MCF 10A (cell line): ENCODE measurements at regions of chr3 and their contacts with region 1.

Region 1: DNA sequence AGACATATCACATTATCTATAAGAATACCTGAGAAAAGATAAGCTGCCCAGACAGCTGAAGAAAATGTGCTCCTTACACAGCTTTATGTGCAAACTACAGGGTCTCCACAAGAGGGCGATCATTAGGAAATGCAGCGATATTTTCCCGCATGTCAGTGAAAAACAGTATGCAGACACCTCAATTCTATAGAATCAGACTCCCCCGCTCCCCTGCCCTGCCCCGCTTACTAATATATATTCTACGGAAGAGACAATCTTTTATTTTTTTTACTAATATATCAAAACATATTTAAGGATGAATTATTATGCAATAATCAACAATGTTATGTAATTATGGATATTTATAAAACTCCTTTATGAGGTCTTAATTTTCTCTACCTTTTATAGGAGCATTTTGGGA is 681.3 kb downstream of the ROBO1 start:
- DNase-seq: peak; percentile 69
- H3K4me3 Mint-ChIP-seq: no peak overlapping the region
- H3K27ac Mint-ChIP-seq: no peak overlapping the region
- H3K4me1 Mint-ChIP-seq: no peaks in the 10 kb centered on the region
- H3K27me3 Mint-ChIP-seq: peaks cover 100% of the 10 kb centered on the region
- CTCF ChIP-seq: peak; percentile 59

Region 2: DNA sequence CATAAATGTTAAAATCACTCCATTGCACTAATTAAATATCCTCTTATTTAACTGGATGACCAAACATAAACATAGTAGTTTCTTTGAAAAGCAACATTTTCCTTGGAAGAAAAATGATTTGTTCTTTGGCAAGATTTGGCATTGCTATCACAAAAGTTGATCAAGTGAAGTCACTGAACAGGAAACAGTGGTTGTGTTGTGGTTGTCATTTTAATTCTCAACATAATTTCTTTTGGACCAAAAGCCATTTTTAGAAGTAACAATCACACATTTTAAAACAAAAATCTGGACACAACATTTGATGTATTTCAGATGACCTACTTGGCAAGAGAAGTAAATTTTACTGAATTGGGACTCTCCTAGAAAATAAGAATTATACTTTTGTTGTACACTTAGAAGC is 191.0 kb before region 1 on chr3:
- CTCF ChIA-PET with region 1: no interaction called
- POLR2A ChIA-PET with region 1: no interaction called
- intact Hi-C with region 1: no loop called
- DNase-seq: no peak
- H3K4me3 Mint-ChIP-seq: no peak overlapping the region
- H3K27ac Mint-ChIP-seq: no peak overlapping the region
- H3K4me1 Mint-ChIP-seq: peaks cover 5% of the 10 kb centered on the region
- H3K27me3 Mint-ChIP-seq: no peaks in the 10 kb centered on the region
- CTCF ChIP-seq: no peak

Region 3: GRCh38 chr3:79103305-79103704 is 16.8 kb after region 1 on chr3:
- CTCF ChIA-PET with region 1: interaction called, 45 read pairs
- POLR2A ChIA-PET with region 1: no interaction called
- intact Hi-C with region 1: no loop called
- DNase-seq: no peak
- H3K4me3 Mint-ChIP-seq: no peak overlapping the region
- H3K27ac Mint-ChIP-seq: no peak overlapping the region
- H3K4me1 Mint-ChIP-seq: no peaks in the 10 kb centered on the region
- H3K27me3 Mint-ChIP-seq: peaks cover 93% of the 10 kb centered on the region
- CTCF ChIP-seq: no peak

Region 4: GRCh38 chr3:79497447-79498111 is 411.1 kb after region 1 on chr3:
- CTCF ChIA-PET with region 1: no interaction called
- POLR2A ChIA-PET with region 1: no interaction called
- intact Hi-C with region 1: loop called (anchors 1 kb)
- DNase-seq: peak; percentile 28
- H3K4me3 Mint-ChIP-seq: no peak overlapping the region
- H3K27ac Mint-ChIP-seq: no peak overlapping the region
- H3K4me1 Mint-ChIP-seq: no peaks in the 10 kb centered on the region
- H3K27me3 Mint-ChIP-seq: peaks cover 20% of the 10 kb centered on the region
- CTCF ChIP-seq: peak; percentile 47